Transverse colon (tissue), 4 donors: ENCODE measurements at regions of chr17 and their contacts with region 1.

Region 1: GRCh38 chr17:82072827-82073226 is 7.2 kb upstream of the DUS1L start:
- DNase-seq: peak; percentile 54
- H3K4me3 ChIP-seq: no peak overlapping the region
- H3K27ac ChIP-seq: peak overlapping the region; percentile 65 to 83 (median 74)
- H3K4me1 ChIP-seq: peaks cover 0 to 14% (median 2%) of the 10 kb centered on the region in 4 donors
- H3K27me3 ChIP-seq: no peaks in the 10 kb centered on the region
- CTCF ChIP-seq: no peak
- EP300 ChIP-seq: peak; percentile 25
- POLR2A ChIP-seq: peak; percentile 32

Region 2: DNA sequence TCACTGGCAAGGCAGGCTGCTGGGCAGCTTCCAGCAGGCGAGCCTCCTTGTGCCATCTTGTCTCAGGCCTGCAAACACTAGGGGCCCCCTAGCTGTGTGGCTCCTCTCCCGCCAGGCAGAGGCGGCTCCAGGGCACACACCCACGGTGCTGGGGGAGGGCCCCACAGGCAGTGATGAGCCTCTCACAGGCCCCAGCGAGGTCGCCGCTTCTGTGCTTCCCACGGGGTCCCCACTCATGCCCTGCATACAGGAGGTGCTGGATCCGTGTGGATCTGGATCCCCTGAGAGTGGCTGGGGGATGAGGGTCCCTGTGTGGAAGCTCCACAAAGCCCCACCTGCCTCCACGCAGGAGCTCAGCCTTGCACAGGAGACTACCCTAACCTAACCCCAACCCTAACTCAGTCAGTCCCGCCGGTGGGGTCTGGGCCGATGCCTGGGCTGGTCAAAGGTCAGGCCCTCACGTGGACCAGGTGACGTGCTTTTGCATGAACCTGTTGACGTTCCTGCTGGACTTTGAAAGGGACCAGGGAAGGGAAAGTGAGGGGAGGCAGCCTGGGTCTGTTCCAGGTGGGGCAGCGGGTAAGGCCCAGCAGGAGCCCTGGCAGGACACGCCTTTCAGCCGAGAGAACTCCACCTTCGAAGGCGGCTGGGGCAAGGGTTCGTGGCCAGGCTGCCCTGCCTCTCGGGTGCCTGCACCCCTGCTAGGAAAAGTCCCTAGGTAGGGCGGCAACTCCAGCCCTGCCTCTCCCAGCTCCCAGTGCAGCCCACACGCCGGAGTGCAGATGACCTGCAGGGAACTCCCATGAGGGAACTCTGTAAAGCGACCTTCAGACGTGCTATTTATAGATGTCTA is 255.5 kb after region 1 on chr17:
- in situ Hi-C with region 1: no loop called
- intact Hi-C with region 1: loop called (anchors 5 kb)
- DNase-seq: peak; percentile 87
- H3K4me3 ChIP-seq: no peak overlapping the region
- H3K27ac ChIP-seq: peak overlapping the region; percentile 51 to 82 (median 68)
- H3K4me1 ChIP-seq: peaks cover 26 to 76% (median 64%) of the 10 kb centered on the region in 4 donors
- H3K27me3 ChIP-seq: no peaks in the 10 kb centered on the region
- CTCF ChIP-seq: peak in 1 of 5 experiments; percentile 14
- EP300 ChIP-seq: no peak
- POLR2A ChIP-seq: peak; percentile 4